Sciatic nerve (tissue), 2 donors: ENCODE measurements at regions of chr10 and their contacts with region 1.

Region 1: GRCh38 chr10:100433253-100434240 is 29.3 kb upstream of the WNT8B start:
- DNase-seq: peak; percentile 97
- ATAC-seq: peak; percentile 95

Region 2: GRCh38 chr10:100114976-100115770 is 318.4 kb before region 1 on chr10:
- intact Hi-C with region 1: no loop called
- DNase-seq: no peak
- ATAC-seq: no peak

Region 3: DNA sequence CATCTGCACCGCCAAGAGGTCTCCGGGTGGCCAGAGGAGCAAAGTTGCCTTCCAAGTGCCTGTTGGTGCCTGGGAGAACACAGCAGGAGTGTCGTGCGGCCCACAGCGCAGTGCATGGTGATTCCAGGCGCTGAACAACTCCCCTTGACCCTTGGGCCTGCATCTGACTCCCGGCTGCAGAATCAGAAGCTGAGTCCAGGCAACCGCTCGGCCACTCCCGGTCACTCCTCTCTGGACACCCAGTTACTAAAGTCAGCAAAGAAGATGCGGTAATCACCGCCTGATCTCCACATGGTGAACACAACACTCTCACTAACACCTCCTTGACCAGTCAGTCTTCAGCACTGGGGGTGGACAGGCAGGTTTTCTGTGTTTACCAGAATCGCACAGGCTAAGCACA is 51.0 kb before region 1 on chr10:
- intact Hi-C with region 1: no loop called
- DNase-seq: no peak
- ATAC-seq: no peak

Region 4: GRCh38 chr10:100518761-100519241 is 85.3 kb after region 1 on chr10:
- intact Hi-C with region 1: loop called (anchors 10 kb)
- DNase-seq: peak; percentile 82
- ATAC-seq: peak; percentile 83